Pancreas (tissue), 10 donors: ENCODE measurements at regions of chr16 and their contacts with region 1.

Region 1: DNA sequence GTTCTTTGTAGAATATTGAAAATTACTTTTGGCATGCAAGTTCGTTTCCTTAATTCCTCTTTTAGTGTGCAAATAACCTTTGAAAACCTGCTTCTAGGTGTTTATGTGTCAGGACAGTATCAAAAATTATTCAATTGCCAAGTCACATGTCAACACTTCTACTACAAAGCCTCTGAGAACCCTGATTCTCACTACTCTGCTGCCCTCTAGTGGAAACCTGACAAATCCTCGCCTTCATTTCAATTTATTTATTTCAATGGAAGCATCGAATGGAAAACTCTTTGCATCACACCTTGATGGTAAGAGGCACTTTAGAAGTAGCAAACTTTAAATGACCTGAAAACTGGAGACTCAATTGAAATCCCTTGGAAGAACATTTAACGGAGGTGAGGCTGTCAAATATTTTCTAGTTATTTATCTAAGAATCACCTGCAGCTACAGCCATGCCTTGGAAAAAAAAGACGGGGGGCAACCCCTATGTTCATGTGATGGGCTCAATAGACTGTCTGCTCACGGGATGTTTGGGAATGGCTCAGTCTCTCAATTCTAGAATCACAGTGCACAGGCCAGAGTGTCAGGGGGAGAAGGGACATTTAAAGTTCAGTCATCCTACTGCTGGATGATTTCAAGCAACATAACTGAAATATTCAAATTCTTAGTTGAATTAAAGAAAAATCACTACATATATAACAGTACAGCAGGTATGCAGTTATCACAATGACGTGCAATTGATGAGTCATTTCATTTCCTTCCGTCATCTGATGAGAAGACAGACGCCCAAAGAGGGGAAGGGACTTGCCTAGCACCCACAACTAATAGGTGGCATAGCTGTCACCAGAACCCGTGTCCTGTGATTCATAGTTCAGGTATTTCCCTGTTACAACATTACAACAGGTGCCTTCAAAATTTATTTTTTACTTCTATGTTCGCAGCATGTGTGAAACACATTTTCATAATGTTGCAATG is 563.9 kb downstream of the TOX3 start:
- DNase-seq: peak in 3 of 6 donors; percentile 48 to 70 (median 55)
- ATAC-seq: peak; percentile 91 to 97 (median 92)
- H3K4me3 ChIP-seq: no peak overlapping the region
- H3K27ac ChIP-seq: no peak overlapping the region
- H3K4me1 ChIP-seq: peaks cover 0 to 7% (median 0%) of the 10 kb centered on the region in 3 donors
- H3K27me3 ChIP-seq: no peaks in the 10 kb centered on the region
- CTCF ChIP-seq: peak; percentile 46 to 82 (median 70)

Region 2: DNA sequence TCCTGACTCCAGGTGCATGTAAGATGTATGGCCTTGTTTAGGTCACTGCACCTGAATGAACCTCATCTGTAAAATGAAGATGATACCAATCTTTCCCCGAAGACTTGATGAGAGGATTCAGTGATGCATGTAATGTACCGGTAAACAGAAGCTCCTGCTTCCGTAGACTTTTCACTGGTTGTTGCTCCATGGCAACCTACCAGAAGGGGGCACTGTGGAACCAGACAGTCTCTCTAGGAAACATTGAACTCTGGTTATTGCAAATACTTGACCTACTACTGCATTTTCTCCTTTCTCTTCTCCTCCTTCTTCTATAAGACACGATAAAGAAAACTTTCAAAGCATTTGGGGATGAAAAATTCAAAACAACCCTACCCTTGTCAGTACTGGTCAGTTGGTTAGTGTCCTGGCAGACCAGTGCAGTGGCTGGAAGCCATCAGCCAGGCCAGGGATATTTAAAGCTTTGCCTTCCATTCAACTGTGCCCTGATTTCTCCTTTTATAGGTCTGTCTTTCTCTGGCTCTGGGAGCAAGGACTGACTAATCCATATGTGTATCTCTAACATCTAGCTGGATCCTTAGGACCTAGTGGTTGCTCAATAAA is 164.6 kb before region 1 on chr16:
- intact Hi-C with region 1: loop called in 2 of 3 experiments (anchors 5 to 10 kb)
- DNase-seq: peak in 5 of 6 donors; percentile 39 to 77 (median 53)
- ATAC-seq: peak; percentile 55 to 93 (median 73)
- H3K4me3 ChIP-seq: no peak overlapping the region
- H3K27ac ChIP-seq: no peak overlapping the region
- H3K4me1 ChIP-seq: no peaks in the 10 kb centered on the region
- H3K27me3 ChIP-seq: no peaks in the 10 kb centered on the region
- CTCF ChIP-seq: peak; percentile 43 to 75 (median 58)